Mammary epithelial cell (primary cell): ENCODE measurements at regions of chr20 and their contacts with region 1.

Region 1: DNA sequence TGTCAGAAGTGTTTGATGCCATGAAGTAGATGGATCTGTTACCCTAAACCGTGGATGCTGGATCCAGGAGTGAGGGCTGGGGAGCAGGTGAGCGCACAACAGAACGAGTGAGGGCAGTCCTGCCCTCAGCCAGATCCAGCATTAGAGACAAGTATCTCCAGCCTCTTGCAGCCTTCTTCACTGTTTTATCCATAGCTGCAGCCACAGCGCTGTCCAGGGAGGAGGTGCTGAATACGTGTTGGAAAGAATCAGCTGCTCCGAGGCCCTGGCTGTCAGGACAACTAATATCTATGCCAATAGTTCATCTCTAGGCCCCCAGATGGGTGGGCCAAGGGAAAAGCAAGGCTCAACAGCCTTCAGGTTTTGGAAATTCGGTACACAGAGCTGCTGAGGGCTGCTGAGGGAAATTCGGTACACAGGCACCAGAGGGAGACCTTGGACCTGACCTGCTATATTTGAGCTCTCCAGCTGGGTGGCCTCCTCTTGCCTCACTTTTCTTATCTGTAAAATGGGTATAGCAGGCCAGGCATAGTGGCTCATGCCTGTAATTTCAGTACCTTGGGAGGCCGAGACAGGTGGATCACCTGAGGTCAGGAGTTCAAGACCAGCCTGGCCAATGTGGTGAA is 278.7 kb downstream of the CDH4 start:
- DNase-seq: peak; percentile 36
- H3K4me3 ChIP-seq: no peak overlapping the region
- H3K27ac ChIP-seq: no peak overlapping the region
- H3K4me1 ChIP-seq: peaks cover 7% of the 10 kb centered on the region
- H3K27me3 ChIP-seq: no peaks in the 10 kb centered on the region
- CTCF ChIP-seq: peak in 1 of 2 donors; percentile 16

Region 2: DNA sequence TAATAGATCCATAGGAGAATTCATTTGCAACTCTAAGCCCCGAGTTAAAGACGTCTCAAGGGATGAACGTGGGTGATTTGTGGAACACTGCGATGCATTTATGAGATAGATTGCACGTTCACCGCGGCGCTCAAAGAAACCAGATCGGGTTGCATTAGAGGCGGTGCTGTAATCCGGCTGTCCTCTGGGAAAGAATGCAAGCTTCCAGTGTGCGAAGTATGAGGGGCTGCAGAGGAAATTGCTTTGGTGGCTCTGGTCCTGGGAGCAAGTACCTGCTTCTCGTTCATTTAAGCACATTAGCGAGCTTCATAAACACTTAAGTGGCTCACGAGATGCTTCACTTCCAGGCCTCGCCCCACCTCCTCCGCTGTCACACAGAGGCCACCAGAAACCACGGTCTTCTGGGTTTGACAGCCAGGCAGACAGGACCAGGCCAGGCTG is 96.4 kb before region 1 on chr20:
- CTCF ChIA-PET with region 1: no interaction called
- dilution Hi-C with region 1: loop called (anchors 5 kb)
- in situ Hi-C with region 1: no loop called
- intact Hi-C with region 1: no loop called
- DNase-seq: no peak
- H3K4me3 ChIP-seq: no peak overlapping the region
- H3K27ac ChIP-seq: no peak overlapping the region
- H3K4me1 ChIP-seq: peaks cover 51% of the 10 kb centered on the region
- H3K27me3 ChIP-seq: no peaks in the 10 kb centered on the region
- CTCF ChIP-seq: no peak

Region 3: GRCh38 chr20:61516346-61517215 is 14.2 kb before region 1 on chr20:
- CTCF ChIA-PET with region 1: no interaction called
- dilution Hi-C with region 1: no loop called
- in situ Hi-C with region 1: no loop called
- intact Hi-C with region 1: no loop called
- DNase-seq: no peak
- H3K4me3 ChIP-seq: no peak overlapping the region
- H3K27ac ChIP-seq: no peak overlapping the region
- H3K4me1 ChIP-seq: no peaks in the 10 kb centered on the region
- H3K27me3 ChIP-seq: no peaks in the 10 kb centered on the region
- CTCF ChIP-seq: no peak